ENCODE measurements at regions of chr19 and their contacts with region 1.

Region 1: DNA sequence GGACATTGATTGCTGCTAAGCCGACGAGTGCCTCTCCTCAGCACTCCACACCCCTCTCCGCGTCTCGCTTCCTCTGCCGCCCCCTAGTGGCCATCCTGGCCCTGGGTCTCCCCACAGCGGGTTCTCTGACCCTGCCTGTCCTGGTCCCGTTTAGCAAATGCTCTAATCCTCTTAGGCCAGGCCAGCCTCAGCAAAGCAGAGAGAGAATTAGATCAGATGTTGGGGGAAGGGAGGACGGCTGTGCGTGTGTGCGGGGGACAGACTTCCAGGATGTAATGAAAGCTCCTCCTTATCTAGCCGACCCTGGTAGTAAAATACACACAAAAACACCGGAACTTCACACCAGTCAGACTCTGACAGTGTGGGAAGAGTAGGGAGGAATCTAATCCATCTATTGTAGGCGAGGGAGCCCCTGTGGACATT is 4.5 kb downstream of the TPRX2 start:
- DNase-seq: no peak
- H3K4me3 ChIP-seq: no peak overlapping the region
- CTCF ChIP-seq: peak; percentile 95

Region 2: GRCh38 chr19:47765523-47766358 is 97.8 kb before region 1 on chr19:
- CTCF ChIA-PET with region 1: interaction called, 39 read pairs
- POLR2A ChIA-PET with region 1: no interaction called
- DNase-seq: no peak
- H3K4me3 ChIP-seq: no peak overlapping the region
- CTCF ChIP-seq: peak; percentile 88

Region 3: DNA sequence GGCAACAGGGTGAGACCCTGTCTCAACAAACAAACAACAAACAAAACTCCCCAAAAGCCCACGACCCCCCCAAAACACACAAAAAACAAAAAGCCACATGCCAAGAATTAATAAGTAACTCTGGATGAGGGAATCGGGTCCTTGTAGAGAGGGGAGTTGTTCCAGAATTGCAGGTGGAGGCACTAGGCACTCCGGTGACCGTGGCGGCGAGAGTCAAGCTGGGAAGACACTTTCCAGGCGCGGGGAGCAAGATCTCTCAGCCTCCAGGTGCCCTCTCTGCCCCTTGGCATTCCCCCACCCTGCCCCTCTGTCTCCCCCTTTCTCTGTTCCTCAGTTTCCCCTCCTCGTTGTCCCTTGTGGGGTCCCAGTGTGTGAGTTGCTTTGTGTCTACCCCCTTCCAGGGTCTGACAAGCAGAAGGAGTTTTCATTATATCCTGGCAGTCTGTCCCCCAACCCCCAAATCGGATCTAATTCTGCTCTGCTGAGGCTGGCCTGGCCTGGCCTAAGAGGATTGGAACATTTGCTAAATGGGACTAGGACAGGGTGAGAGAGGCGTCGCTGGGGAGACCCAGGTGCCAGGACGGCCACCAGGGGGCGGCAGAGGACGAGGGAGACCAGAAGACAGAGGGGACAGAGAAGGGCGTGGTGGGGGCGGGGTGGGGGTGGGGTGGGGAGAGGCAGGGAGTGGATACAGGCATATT is 50.1 kb before region 1 on chr19:
- CTCF ChIA-PET with region 1: interaction called, 11 read pairs
- POLR2A ChIA-PET with region 1: no interaction called
- DNase-seq: no peak
- H3K4me3 ChIP-seq: no peak overlapping the region
- CTCF ChIP-seq: peak; percentile 75

Region 4: DNA sequence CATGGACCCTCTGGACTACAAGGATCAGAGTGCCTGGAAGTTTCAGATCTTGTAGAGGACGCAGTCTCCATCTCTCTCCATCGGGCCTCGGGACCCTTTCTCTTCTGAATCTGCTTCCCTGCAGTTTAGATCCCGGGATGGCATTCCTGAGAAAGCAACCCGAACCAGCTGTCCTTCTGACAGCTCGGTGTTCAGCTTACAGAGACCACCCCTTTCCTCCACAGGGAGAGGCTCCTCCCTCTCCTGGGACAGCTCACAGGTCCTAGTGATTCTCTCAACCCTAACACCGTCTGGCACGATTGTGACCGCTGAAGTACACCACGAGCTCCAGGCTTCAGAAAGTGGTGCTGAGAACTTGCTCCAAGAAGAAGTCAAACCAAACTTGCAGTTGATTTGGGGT is 23.6 kb before region 1 on chr19:
- CTCF ChIA-PET with region 1: interaction called, 43 read pairs
- POLR2A ChIA-PET with region 1: no interaction called
- DNase-seq: no peak
- H3K4me3 ChIP-seq: no peak overlapping the region
- CTCF ChIP-seq: no peak

Region 5: GRCh38 chr19:47886010-47886559 is 22.6 kb after region 1 on chr19 and contains the start of gene SULT2A1:
- CTCF ChIA-PET with region 1: interaction called, 11 read pairs
- POLR2A ChIA-PET with region 1: no interaction called
- DNase-seq: no peak
- H3K4me3 ChIP-seq: no peak within 1 kb of the TSS
- CTCF ChIP-seq: no peak

Measured in AG04449 (cell line).